SK-N-SH (cell line): ENCODE measurements at regions of chr11 and their contacts with region 1.

Region 1: DNA sequence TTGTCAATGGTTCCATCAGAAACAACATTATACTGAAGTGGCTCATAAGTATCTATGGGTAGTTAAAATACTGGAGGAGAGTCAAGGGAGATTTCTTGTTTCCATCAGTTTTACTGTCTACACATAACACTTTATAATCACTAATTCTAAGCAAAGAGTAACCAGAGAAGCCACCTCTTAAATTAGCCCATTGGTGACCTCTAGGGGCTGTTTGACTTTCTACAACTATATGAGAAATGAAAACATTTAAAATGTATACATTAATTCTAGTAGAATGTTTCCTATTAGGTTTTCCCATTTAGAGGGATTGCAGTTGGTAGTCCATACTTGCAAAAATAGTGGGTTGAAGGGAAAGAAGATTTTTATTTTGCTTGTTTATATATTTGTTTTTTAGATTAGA is 504.3 kb downstream of the FAM181B start:
- DNase-seq: peak; percentile 7
- H3K4me3 ChIP-seq: no peak overlapping the region; a peak in 1 of 4 replicates
- H3K27ac ChIP-seq: no peak overlapping the region
- H3K4me1 ChIP-seq: no peaks in the 10 kb centered on the region
- H3K27me3 ChIP-seq: no peaks in the 10 kb centered on the region
- CTCF ChIP-seq: peak; percentile 62
- EP300 ChIP-seq: no peak
- RAD21 ChIP-seq: peak; percentile 82

Region 2: GRCh38 chr11:81644239-81644840 is 585.0 kb before region 1 on chr11:
- CTCF ChIA-PET with region 1: interaction called, 10 read pairs
- POLR2A ChIA-PET with region 1: no interaction called
- DNase-seq: peak; percentile 33
- H3K4me3 ChIP-seq: peak overlapping the region in 1 of 2 experiments; percentile 26; a peak in 1 of 4 replicates
- H3K27ac ChIP-seq: no peak overlapping the region
- H3K4me1 ChIP-seq: no peaks in the 10 kb centered on the region; a peak in 2 of 4 replicates
- H3K27me3 ChIP-seq: no peaks in the 10 kb centered on the region
- CTCF ChIP-seq: peak; percentile 78
- EP300 ChIP-seq: no peak
- RAD21 ChIP-seq: peak; percentile 71

Region 3: DNA sequence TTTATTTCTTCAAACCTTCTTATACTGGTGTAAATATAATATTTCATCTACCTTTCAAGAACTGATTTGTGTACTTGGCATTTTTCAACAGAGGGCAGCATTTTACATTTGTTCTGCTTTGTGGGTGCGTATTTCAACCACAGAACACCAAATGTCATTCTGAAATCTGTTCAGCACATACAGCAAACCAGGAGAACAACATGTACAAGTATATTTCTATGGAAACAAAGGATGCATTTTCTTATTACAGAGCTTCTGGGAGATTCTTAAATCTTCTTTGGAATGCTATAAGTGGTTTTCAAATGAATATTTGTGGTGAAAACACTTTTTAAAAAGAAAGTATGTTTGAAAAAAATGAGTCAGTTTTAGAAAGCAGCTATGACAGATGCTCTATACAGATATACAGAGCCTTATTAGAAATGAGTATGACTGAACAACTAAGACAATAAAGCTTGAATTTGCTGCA is 441.7 kb before region 1 on chr11:
- CTCF ChIA-PET with region 1: interaction called, 18 read pairs
- POLR2A ChIA-PET with region 1: no interaction called
- DNase-seq: no peak
- H3K4me3 ChIP-seq: no peak overlapping the region
- H3K27ac ChIP-seq: no peak overlapping the region
- H3K4me1 ChIP-seq: no peaks in the 10 kb centered on the region
- H3K27me3 ChIP-seq: no peaks in the 10 kb centered on the region
- CTCF ChIP-seq: peak; percentile 49
- EP300 ChIP-seq: no peak
- RAD21 ChIP-seq: peak; percentile 62

Region 4: DNA sequence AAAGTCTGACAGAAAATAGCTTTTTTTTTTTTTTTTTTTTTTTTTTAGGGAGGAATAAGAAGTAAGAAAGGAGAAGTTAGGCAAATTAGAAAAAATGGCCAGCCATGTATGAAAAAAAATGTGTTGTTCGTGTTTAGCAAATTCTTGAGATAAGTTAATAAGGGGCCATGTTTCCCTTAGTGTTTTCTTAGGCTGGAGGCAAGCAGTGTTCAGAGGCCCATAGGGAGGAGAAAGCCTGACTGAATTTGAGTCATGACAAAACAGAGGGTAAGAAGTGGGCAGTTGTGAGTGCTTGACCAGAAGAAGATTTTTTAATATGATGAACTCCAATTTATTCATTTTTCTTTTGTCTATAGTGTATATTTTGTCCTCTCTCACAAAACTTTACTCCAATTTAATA is 262.1 kb before region 1 on chr11:
- CTCF ChIA-PET with region 1: no interaction called
- POLR2A ChIA-PET with region 1: no interaction called
- DNase-seq: no peak
- H3K4me3 ChIP-seq: no peak overlapping the region
- H3K27ac ChIP-seq: no peak overlapping the region
- H3K4me1 ChIP-seq: no peaks in the 10 kb centered on the region
- H3K27me3 ChIP-seq: no peaks in the 10 kb centered on the region
- CTCF ChIP-seq: no peak
- EP300 ChIP-seq: no peak
- RAD21 ChIP-seq: no peak

Region 5: GRCh38 chr11:82146789-82147188 is 82.6 kb before region 1 on chr11:
- CTCF ChIA-PET with region 1: no interaction called
- POLR2A ChIA-PET with region 1: no interaction called
- DNase-seq: no peak
- H3K4me3 ChIP-seq: no peak overlapping the region
- H3K27ac ChIP-seq: no peak overlapping the region
- H3K4me1 ChIP-seq: no peaks in the 10 kb centered on the region
- H3K27me3 ChIP-seq: no peaks in the 10 kb centered on the region
- CTCF ChIP-seq: no peak
- EP300 ChIP-seq: no peak
- RAD21 ChIP-seq: no peak

Region 6: DNA sequence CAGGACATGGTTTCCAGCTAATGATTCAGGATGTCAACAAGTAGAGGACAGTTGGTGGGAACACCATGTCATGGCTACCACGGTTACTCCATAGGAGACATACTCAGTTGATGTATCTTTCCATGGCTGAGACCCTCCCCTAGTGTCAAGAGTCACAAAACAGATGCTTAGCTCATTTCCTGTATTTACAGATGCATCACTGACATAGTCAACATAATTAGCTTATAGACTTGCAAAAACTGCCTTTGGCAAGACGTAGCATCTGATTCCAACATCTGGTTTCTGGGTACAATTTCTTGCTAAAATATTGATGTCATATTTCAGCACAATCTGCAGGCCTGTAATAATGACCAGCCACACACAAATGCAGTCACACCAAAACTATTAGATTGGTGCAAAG is 46.0 kb before region 1 on chr11:
- CTCF ChIA-PET with region 1: no interaction called
- POLR2A ChIA-PET with region 1: no interaction called
- DNase-seq: peak; percentile 61
- H3K4me3 ChIP-seq: no peak overlapping the region
- H3K27ac ChIP-seq: peak overlapping the region in 1 of 2 experiments; percentile 48; a peak in 1 of 4 replicates
- H3K4me1 ChIP-seq: no peaks in the 10 kb centered on the region; a peak in 1 of 4 replicates
- H3K27me3 ChIP-seq: no peaks in the 10 kb centered on the region
- CTCF ChIP-seq: no peak
- EP300 ChIP-seq: peak in 1 of 2 experiments; percentile 86; a peak in 2 of 4 replicates
- RAD21 ChIP-seq: peak; percentile 15; the same call in 1 of the 2 replicates

Region 7: GRCh38 chr11:82216927-82217570 is 12.3 kb before region 1 on chr11:
- CTCF ChIA-PET with region 1: interaction called, 11 read pairs
- POLR2A ChIA-PET with region 1: no interaction called
- DNase-seq: no peak
- H3K4me3 ChIP-seq: no peak overlapping the region
- H3K27ac ChIP-seq: no peak overlapping the region
- H3K4me1 ChIP-seq: no peaks in the 10 kb centered on the region
- H3K27me3 ChIP-seq: no peaks in the 10 kb centered on the region
- CTCF ChIP-seq: no peak
- EP300 ChIP-seq: no peak
- RAD21 ChIP-seq: no peak